HCT116 (cell line): ENCODE measurements at regions of chr2 and their contacts with region 1.

Region 1: GRCh38 chr2:21042958-21043743 is 722 bp downstream of the APOB start:
- DNase-seq: peak; percentile 8
- ATAC-seq: peak; percentile 86
- H3K4me3 ChIP-seq: no peak overlapping the region
- H3K27ac ChIP-seq: no peak overlapping the region
- H3K4me1 ChIP-seq: no peaks in the 10 kb centered on the region
- H3K27me3 ChIP-seq: peaks cover 30% of the 10 kb centered on the region
- CTCF ChIP-seq: peak; percentile 67 to 99 (median 92)
- POLR2A ChIP-seq: no peak
- RAD21 ChIP-seq: peak; percentile 89

Region 2: DNA sequence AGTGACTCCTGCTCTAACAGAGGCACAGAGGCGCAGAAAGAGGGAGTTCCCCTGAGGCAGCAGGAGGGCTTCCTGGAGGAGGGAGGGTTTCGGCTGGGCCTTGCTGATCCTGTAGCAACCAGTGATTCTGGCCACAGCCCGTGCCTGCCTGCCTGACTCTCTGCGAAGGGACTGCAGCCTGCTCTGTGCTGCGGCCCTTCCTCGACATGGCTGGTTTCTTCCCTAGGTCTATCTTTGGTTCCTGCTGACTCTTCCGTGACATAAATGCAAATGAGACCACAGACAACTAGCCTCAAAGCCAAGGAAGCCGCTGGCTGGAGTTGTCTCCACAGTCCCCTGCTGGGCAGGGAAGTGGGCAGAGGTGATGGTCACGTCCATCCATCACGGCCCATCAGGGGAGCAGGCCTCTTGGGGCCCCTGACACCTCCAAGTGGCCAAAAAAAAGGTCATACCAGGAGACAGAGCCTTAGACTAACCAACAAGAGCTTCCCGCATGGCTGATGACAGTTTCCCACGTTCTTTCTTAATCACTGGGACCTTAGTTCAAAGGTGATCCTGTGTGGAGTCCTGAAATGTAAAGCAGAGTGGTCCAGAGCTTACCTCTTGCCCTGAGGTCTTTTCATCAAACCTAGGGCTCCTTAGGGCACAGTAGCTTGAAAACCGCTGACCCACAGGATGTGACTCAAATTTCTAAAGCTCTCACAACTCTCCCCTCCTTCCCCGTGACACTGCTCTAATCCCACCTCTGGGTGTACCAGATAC is 447.5 kb before region 1 on chr2:
- CTCF ChIA-PET with region 1: no interaction called
- POLR2A ChIA-PET with region 1: no interaction called
- RAD21 ChIA-PET with region 1: no interaction called
- intact Hi-C with region 1: no loop called
- DNase-seq: no peak
- ATAC-seq: peak; percentile 15; the same call in 1 of the 2 replicates
- H3K4me3 ChIP-seq: no peak overlapping the region
- H3K27ac ChIP-seq: no peak overlapping the region; the same call in 1 of the 2 replicates
- H3K4me1 ChIP-seq: peaks cover 27 to 52% of the 10 kb centered on the region in 2 experiments
- H3K27me3 ChIP-seq: no peaks in the 10 kb centered on the region
- CTCF ChIP-seq: 0 out of 6 replicates have a peak, but pooled peaks of 1 of the 3 experiments have one; percentile 4
- POLR2A ChIP-seq: no peak
- RAD21 ChIP-seq: no peak

Region 3: DNA sequence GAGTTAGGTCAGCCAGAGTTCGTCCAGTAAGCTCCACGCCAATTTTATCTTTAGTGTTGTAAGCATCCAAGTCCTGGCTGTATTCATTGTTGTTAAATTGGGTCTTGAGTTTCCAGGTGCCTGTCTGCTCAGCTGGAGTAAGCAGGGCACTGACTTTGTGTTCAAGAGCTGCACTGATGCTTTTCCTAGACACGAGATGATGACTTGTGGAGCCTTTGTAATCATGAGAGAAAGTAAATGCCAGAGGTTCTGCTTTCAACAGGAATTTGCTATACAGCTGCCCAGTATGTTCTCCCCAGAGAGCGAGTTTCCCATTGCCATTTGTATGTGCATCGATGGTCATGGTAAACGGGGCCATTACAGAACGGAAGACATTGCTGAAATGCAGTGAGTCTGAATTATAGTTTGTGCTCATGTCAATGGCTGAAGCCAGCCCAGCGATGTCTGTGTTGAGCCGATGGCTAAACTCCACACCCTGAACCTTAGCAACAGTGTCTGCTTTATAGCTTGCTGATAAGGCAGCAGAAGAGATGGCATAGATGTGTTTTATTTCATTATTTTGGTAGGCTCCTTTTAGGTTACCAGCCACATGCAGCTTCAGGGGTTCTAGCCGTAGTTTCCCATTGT is 32.2 kb before region 1 on chr2:
- CTCF ChIA-PET with region 1: no interaction called
- POLR2A ChIA-PET with region 1: no interaction called
- RAD21 ChIA-PET with region 1: no interaction called
- intact Hi-C with region 1: no loop called
- DNase-seq: no peak
- ATAC-seq: no peak
- H3K4me3 ChIP-seq: no peak overlapping the region
- H3K27ac ChIP-seq: no peak overlapping the region
- H3K4me1 ChIP-seq: no peaks in the 10 kb centered on the region
- H3K27me3 ChIP-seq: peaks cover 57% of the 10 kb centered on the region
- CTCF ChIP-seq: no peak
- POLR2A ChIP-seq: no peak
- RAD21 ChIP-seq: no peak

Region 4: GRCh38 chr2:21118302-21118920 is 75.3 kb after region 1 on chr2:
- CTCF ChIA-PET with region 1: interaction called, 3 read pairs
- POLR2A ChIA-PET with region 1: no interaction called
- RAD21 ChIA-PET with region 1: no interaction called
- intact Hi-C with region 1: loop called (anchors 1 kb)
- DNase-seq: peak; percentile 26
- ATAC-seq: peak; percentile 75
- H3K4me3 ChIP-seq: no peak overlapping the region
- H3K27ac ChIP-seq: no peak overlapping the region
- H3K4me1 ChIP-seq: no peaks in the 10 kb centered on the region
- H3K27me3 ChIP-seq: peaks cover 11% of the 10 kb centered on the region
- CTCF ChIP-seq: peak; percentile 30 to 70 (median 50); a peak in 5 of 6 replicates
- POLR2A ChIP-seq: no peak
- RAD21 ChIP-seq: peak; percentile 64

Region 5: DNA sequence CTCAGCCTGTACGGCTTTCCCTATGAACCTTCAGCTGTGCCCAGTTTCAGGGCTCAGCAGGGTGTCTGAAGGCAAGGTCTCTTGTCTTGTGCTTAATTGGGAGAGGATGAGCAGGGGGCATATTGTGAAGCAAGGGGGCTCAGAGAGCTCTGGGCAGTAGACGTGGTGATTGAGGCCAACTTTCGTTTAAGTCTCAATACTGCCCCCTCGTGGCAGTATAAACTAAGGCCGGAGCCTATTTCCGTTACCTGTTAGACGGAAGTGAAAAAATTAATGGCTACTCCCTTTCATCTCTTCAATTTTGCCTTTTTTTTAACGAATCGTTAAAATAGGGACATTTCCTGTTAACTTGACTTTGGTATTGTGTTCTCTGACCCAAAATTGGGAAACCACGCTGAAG is 274.0 kb after region 1 on chr2:
- CTCF ChIA-PET with region 1: no interaction called
- POLR2A ChIA-PET with region 1: no interaction called
- RAD21 ChIA-PET with region 1: interaction called in 1 of 2 experiments, 3 read pairs
- intact Hi-C with region 1: loop called (anchors 1 kb)
- DNase-seq: peak; percentile 13
- ATAC-seq: peak; percentile 63
- H3K4me3 ChIP-seq: no peak overlapping the region
- H3K27ac ChIP-seq: no peak overlapping the region
- H3K4me1 ChIP-seq: no peaks in the 10 kb centered on the region
- H3K27me3 ChIP-seq: no peaks in the 10 kb centered on the region
- CTCF ChIP-seq: peak in 2 of 3 experiments; percentile 59 to 63; a peak in 3 of 6 replicates
- POLR2A ChIP-seq: no peak
- RAD21 ChIP-seq: peak; percentile 29; the same call in 1 of the 2 replicates